GM12878 (cell line): ENCODE measurements at regions of chr13 and their contacts with region 1.

Region 1: GRCh38 chr13:102596147-102597028 is at the start of gene TPP2:
- DNase-seq: peak; percentile 90
- ATAC-seq: peak; percentile 88
- H3K4me3 ChIP-seq: peak within 1 kb of the TSS; percentile 96
- H3K27ac ChIP-seq: peak within 1 kb of the TSS; percentile 99
- H3K4me1 ChIP-seq: no peaks in the 10 kb centered on the region; the same call in 1 of the 2 replicates
- H3K27me3 ChIP-seq: no peaks in the 10 kb centered on the region
- CTCF ChIP-seq: no peak
- EP300 ChIP-seq: peak; percentile 12 to 31; a peak in 1 of 4 replicates
- POLR2A ChIP-seq: peak; percentile 96
- RAD21 ChIP-seq: no peak
- polyA plus RNA-seq, gene TPP2: 18.4 to 25.6 TPM

Region 2: GRCh38 chr13:102580552-102581169 is 15.7 kb before region 1 on chr13:
- CTCF ChIA-PET with region 1: interaction called, 47 read pairs
- POLR2A ChIA-PET with region 1: no interaction called
- RAD21 ChIA-PET with region 1: interaction called, 3 read pairs
- SMC1A ChIA-PET with region 1: interaction called, 5 read pairs
- in situ Hi-C with region 1: no loop called
- intact Hi-C with region 1: no loop called
- DNase-seq: no peak
- ATAC-seq: peak; percentile 89
- H3K4me3 ChIP-seq: no peak overlapping the region
- H3K27ac ChIP-seq: no peak overlapping the region
- H3K4me1 ChIP-seq: peaks cover 6% of the 10 kb centered on the region
- H3K27me3 ChIP-seq: no peaks in the 10 kb centered on the region
- CTCF ChIP-seq: peak; percentile 68 to 79 (median 71)
- EP300 ChIP-seq: no peak
- POLR2A ChIP-seq: no peak
- RAD21 ChIP-seq: peak; percentile 90

Region 3: DNA sequence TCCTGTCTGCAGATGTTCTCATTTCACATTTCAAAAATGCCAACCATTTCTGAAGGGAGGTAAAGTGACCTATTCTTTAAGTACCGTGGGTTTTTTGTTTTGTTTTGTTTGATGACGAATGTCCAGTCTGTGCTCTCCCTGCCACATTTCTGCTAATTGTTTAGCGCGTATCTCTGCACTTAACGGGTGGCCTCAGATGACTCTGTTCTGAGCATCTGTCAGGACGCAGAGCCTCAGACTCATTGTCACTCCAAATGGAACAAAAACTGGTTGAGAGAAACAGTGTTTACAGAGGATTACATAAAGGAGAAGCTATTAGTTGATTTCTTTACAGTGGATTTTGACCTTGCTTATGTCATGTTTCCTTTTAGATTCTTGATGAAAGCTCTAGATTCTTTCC is 24.1 kb after region 1 on chr13:
- CTCF ChIA-PET with region 1: interaction called, 20 read pairs
- POLR2A ChIA-PET with region 1: interaction called, 4 read pairs
- RAD21 ChIA-PET with region 1: no interaction called
- SMC1A ChIA-PET with region 1: interaction called, 8 read pairs
- in situ Hi-C with region 1: no loop called
- intact Hi-C with region 1: no loop called
- DNase-seq: no peak
- ATAC-seq: no peak
- H3K4me3 ChIP-seq: no peak overlapping the region
- H3K27ac ChIP-seq: no peak overlapping the region
- H3K4me1 ChIP-seq: no peaks in the 10 kb centered on the region
- H3K27me3 ChIP-seq: no peaks in the 10 kb centered on the region
- CTCF ChIP-seq: no peak
- EP300 ChIP-seq: no peak
- POLR2A ChIP-seq: no peak
- RAD21 ChIP-seq: no peak

Region 4: GRCh38 chr13:102800145-102801041 is 204.0 kb after region 1 on chr13:
- CTCF ChIA-PET with region 1: interaction called, 21 read pairs
- POLR2A ChIA-PET with region 1: interaction called, 4 read pairs
- RAD21 ChIA-PET with region 1: interaction called, 3 read pairs
- SMC1A ChIA-PET with region 1: interaction called, 4 read pairs
- in situ Hi-C with region 1: no loop called
- intact Hi-C with region 1: loop called (anchors 1 kb)
- DNase-seq: no peak
- ATAC-seq: peak; percentile 87
- H3K4me3 ChIP-seq: peak overlapping the region; percentile 77
- H3K27ac ChIP-seq: peak overlapping the region; percentile 72
- H3K4me1 ChIP-seq: peaks cover 5% of the 10 kb centered on the region; the same call in 1 of the 2 replicates
- H3K27me3 ChIP-seq: no peaks in the 10 kb centered on the region
- CTCF ChIP-seq: peak; percentile 76 to 91 (median 83)
- EP300 ChIP-seq: no peak
- POLR2A ChIP-seq: peak; percentile 85
- RAD21 ChIP-seq: peak; percentile 61

Region 5: DNA sequence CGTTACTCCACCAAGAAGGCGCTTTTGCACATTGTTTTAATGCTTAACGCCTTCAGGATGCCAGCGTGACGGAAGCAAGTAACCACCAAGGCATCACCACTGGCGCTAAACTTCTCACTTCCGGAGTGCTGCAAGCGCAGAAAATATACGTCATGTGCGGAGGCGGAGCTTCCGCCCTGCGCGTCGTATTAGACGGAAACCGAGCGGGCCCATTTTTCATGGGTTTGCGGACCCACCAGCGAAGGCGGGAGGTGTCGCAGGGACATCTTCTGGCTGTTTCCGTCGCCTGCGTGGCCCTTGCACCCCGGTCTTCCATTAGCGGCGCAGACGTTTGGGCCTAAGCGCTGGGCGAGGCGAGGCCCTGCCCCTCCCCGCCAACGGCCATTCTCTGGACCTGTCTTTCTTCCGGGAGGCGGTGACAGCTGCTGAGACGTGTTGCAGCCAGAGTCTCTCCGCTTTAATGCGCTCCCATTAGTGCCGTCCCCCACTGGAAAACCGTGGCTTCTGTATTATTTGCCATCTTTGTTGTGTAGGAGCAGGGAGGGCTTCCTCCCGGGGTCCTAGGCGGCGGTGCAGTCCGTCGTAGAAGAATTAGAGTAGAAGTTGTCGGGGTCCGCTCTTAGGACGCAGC is 249.4 kb after region 1 on chr13 and contains the start of gene ERCC5:
- CTCF ChIA-PET with region 1: interaction called, 106 read pairs
- POLR2A ChIA-PET with region 1: interaction called, 81 read pairs
- RAD21 ChIA-PET with region 1: interaction called, 32 read pairs
- SMC1A ChIA-PET with region 1: interaction called, 53 read pairs
- in situ Hi-C with region 1: loop called (anchors 5 kb)
- intact Hi-C with region 1: loop called (anchors 1 kb)
- DNase-seq: peak; percentile 90
- ATAC-seq: peak; percentile 93
- H3K4me3 ChIP-seq: peak within 1 kb of the TSS; percentile 98
- H3K27ac ChIP-seq: peak within 1 kb of the TSS; percentile 96
- H3K4me1 ChIP-seq: peaks cover 3% of the 10 kb centered on the region; the same call in 1 of the 2 replicates
- H3K27me3 ChIP-seq: no peaks in the 10 kb centered on the region
- CTCF ChIP-seq: peak in 1 of 3 experiments; percentile 4; a peak in 2 of 6 replicates
- EP300 ChIP-seq: 0 out of 4 replicates have a peak, but pooled peaks of 1 of the 2 experiments have one; percentile 24
- POLR2A ChIP-seq: peak; percentile 89
- RAD21 ChIP-seq: no peak; the same call in 1 of the 2 replicates
- polyA plus RNA-seq, gene ERCC5: 11.7 to 24.3 TPM

Region 6: DNA sequence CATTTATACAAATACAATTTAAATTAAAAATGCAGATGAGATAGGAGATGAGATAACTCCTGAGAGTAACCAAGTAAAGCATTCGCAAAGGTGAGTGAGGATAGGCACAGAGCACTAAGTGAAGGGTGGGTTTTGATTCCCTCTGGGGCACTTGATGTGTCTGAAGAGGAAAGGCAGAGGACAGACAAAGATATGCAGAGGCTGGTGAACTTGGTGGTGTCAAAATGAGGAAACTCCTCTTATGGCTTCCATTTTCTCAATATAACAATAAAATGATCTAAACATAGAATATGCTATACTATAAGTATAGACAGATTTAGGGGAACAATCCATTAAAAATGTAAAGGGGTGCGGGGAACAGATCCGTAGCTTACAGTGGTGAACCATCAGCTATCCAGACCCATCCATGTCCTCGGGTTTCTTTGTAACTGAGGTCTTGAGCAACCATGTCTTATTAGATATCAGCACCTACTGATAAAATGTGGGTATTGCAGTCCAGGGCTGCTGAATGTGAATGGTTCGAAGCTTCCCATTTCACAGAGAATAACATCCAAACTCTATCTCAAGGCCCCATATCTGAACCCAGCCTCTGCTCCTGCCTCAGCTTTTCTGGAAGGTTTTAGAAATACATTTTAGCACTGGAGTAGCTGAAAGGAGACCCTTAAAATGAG is 543.7 kb after region 1 on chr13:
- CTCF ChIA-PET with region 1: no interaction called
- POLR2A ChIA-PET with region 1: no interaction called
- RAD21 ChIA-PET with region 1: no interaction called
- SMC1A ChIA-PET with region 1: no interaction called
- in situ Hi-C with region 1: loop called (anchors 25 kb)
- intact Hi-C with region 1: loop called (anchors 10 kb)
- DNase-seq: peak; percentile 52
- ATAC-seq: peak; percentile 93
- H3K4me3 ChIP-seq: no peak overlapping the region
- H3K27ac ChIP-seq: no peak overlapping the region
- H3K4me1 ChIP-seq: no peaks in the 10 kb centered on the region
- H3K27me3 ChIP-seq: no peaks in the 10 kb centered on the region
- CTCF ChIP-seq: peak; percentile 70 to 90 (median 74)
- EP300 ChIP-seq: no peak
- POLR2A ChIP-seq: no peak
- RAD21 ChIP-seq: peak; percentile 98